Activated CD4-positive, alpha-beta memory T cell treated with anti-CD3 and anti-CD28 coated beads for 36 hours (primary cell): ENCODE measurements at regions of chr10 and their contacts with region 1.

Region 1: DNA sequence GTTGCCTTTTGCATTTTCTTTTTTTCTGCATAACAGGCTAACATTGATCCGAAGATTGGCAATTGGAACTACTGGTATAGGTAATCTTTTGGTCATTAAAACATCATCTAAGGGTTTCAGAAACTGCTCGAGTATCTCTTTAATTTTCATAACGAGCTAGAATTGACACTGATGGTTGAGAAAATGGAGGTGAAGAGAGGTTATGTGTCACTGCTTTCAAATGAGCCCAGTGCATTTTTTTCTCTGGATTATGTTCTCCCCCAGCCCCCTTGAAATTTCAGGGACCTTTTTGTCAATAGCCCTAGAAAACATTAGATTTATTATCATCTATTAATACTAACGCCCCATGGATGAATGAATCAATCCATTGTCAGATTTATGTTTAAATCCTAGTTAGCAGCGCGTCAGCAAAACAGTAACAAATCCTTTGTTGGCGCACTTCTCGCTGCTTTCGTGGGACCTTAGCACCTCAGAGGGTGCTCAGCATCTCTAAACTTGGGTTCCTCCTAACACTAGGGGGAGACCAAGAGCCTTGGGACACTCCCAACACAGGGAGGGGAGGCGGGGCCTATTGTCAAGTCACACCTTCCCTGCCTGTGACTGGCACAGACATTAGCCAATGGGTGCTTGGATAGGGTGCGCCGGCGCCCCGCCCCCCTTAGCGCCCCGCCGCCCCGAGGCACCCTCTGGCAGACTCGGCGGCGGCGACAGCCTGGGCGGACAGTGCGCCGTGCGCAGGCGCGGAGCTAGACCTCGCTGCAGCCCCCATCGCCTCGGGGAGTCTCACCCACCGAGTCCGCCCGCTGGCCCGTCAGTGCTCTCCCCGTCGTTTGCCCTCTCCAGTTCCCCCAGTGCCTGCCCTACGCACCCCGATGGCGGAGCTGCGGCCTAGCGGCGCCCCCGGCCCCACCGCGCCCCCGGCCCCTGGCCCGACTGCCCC is at the start of gene SUFU:
- DNase-seq: peak; percentile 98
- H3K4me3 Mint-ChIP-seq: peak within 1 kb of the TSS; percentile 95
- H3K27ac Mint-ChIP-seq: peak within 1 kb of the TSS; percentile 79
- H3K4me1 Mint-ChIP-seq: peaks cover 23% of the 10 kb centered on the region
- H3K27me3 Mint-ChIP-seq: no peaks in the 10 kb centered on the region
- total RNA-seq, gene SUFU: 8.2 to 10.0 TPM

Region 2: GRCh38 chr10:102132563-102133372 is 370.8 kb before region 1 on chr10 and contains the start of gene PPRC1:
- CTCF ChIA-PET with region 1: no interaction called
- POLR2A ChIA-PET with region 1: no interaction called
- intact Hi-C with region 1: loop called (anchors 1 kb)
- DNase-seq: peak; percentile 99
- H3K4me3 Mint-ChIP-seq: peak within 1 kb of the TSS; percentile 100
- H3K27ac Mint-ChIP-seq: peak within 1 kb of the TSS; percentile 98
- H3K4me1 Mint-ChIP-seq: peaks cover 42% of the 10 kb centered on the region
- H3K27me3 Mint-ChIP-seq: no peaks in the 10 kb centered on the region
- total RNA-seq, gene PPRC1: 59.1 to 65.9 TPM

Region 3: GRCh38 chr10:102394079-102394800 is 109.3 kb before region 1 on chr10:
- CTCF ChIA-PET with region 1: interaction called, 6 read pairs
- POLR2A ChIA-PET with region 1: no interaction called
- intact Hi-C with region 1: loop called (anchors 1 kb)
- DNase-seq: peak; percentile 99
- H3K4me3 Mint-ChIP-seq: peak overlapping the region; percentile 94
- H3K27ac Mint-ChIP-seq: peak overlapping the region; percentile 99
- H3K4me1 Mint-ChIP-seq: peaks cover 39% of the 10 kb centered on the region
- H3K27me3 Mint-ChIP-seq: no peaks in the 10 kb centered on the region

Region 4: DNA sequence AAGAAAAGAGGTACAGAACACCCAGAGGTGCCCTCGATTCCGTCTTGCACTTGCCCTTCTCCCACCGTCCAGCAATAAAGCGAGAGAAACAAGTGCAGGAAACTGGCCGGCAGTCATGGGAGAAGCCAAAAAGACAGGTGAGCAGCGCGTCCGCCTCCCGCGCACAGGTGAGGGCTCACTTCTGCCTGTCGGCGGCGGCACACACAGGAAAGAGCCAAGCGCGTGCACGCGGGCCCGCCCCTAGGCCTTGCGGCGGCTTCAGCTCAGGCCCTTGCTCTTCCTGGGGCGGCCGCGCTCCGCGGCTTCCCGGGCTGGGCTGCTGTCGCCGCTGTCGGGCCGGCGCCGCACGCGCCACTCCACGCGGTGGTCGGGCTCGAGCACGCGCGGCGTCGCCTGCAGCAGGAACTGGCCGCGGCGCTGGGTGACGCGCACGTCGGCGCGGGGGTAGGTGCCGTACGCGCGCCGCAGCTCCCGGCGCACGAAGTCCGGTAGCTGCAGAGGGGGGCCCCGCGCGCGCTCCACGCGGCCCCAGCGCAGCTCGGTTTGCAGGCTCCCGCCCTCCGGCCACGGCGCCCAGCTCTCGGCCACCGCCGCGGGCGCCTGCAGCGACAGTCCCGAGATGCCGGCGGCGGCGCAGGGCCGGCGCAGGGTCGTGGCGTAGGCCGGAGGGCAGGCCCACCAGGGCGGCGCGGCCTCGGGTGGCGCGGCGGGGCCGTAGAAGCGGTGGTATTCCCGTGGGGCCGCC is 53.2 kb before region 1 on chr10:
- CTCF ChIA-PET with region 1: interaction called, 3 read pairs
- POLR2A ChIA-PET with region 1: no interaction called
- intact Hi-C with region 1: loop called (anchors 1 kb)
- DNase-seq: peak; percentile 90
- H3K4me3 Mint-ChIP-seq: peak overlapping the region; percentile 94
- H3K27ac Mint-ChIP-seq: peak overlapping the region; percentile 94
- H3K4me1 Mint-ChIP-seq: peaks cover 35% of the 10 kb centered on the region
- H3K27me3 Mint-ChIP-seq: no peaks in the 10 kb centered on the region

Region 5: GRCh38 chr10:102532126-102532525 is 28.6 kb after region 1 on chr10:
- CTCF ChIA-PET with region 1: no interaction called
- POLR2A ChIA-PET with region 1: no interaction called
- intact Hi-C with region 1: no loop called
- DNase-seq: no peak
- H3K4me3 Mint-ChIP-seq: no peak overlapping the region
- H3K27ac Mint-ChIP-seq: no peak overlapping the region
- H3K4me1 Mint-ChIP-seq: no peaks in the 10 kb centered on the region
- H3K27me3 Mint-ChIP-seq: no peaks in the 10 kb centered on the region

Region 6: GRCh38 chr10:102583435-102584417 is 80.2 kb after region 1 on chr10:
- CTCF ChIA-PET with region 1: interaction called, 139 read pairs
- POLR2A ChIA-PET with region 1: interaction called, 10 read pairs
- intact Hi-C with region 1: loop called (anchors 1 kb)
- DNase-seq: peak; percentile 90
- H3K4me3 Mint-ChIP-seq: no peak overlapping the region
- H3K27ac Mint-ChIP-seq: no peak overlapping the region
- H3K4me1 Mint-ChIP-seq: peaks cover 13% of the 10 kb centered on the region
- H3K27me3 Mint-ChIP-seq: no peaks in the 10 kb centered on the region

Region 7: GRCh38 chr10:102743588-102744373 is 240.2 kb after region 1 on chr10 and contains the start of gene WBP1L:
- CTCF ChIA-PET with region 1: interaction called, 4 read pairs
- POLR2A ChIA-PET with region 1: no interaction called
- intact Hi-C with region 1: loop called (anchors 1 kb)
- DNase-seq: peak; percentile 97
- H3K4me3 Mint-ChIP-seq: peak within 1 kb of the TSS; percentile 98
- H3K27ac Mint-ChIP-seq: peak within 1 kb of the TSS; percentile 67
- H3K4me1 Mint-ChIP-seq: peaks cover 41% of the 10 kb centered on the region
- H3K27me3 Mint-ChIP-seq: no peaks in the 10 kb centered on the region
- total RNA-seq, gene WBP1L: 14.6 to 15.9 TPM